ENCODE measurements at regions of chr3 and their contacts with region 1.

Region 1: DNA sequence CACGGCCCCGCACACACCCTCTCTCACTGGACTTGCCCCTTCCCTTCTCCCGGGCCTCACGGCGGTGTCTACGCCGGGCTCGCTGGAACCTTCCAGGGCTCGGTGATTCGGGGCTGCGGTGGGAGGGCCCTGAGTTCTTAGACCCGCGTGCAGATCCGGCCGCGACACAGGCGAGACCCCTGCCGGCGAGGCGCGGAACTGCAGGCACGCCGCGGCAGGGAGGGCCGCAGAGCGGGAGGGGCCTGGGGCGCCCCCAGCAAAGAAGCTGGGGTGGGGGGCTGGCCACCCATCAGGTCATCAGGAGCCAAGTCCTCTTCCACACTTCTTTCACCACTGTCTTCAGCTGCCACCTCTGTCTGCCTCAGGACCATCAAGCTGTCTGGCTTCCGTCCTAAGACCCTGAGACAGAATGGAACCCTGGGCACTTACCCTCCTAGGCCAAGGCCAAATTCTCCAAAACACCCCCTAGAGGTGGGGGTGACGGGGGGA is 164.5 kb downstream of the XXYLT1 start:
- DNase-seq: peak; percentile 39
- H3K4me3 ChIP-seq: no peak overlapping the region
- H3K27ac ChIP-seq: no peak overlapping the region
- H3K4me1 ChIP-seq: peaks cover 5% of the 10 kb centered on the region
- H3K27me3 ChIP-seq: no peaks in the 10 kb centered on the region
- CTCF ChIP-seq: peak; percentile 98 to 100 (median 100)
- POLR2A ChIP-seq: no peak

Region 2: DNA sequence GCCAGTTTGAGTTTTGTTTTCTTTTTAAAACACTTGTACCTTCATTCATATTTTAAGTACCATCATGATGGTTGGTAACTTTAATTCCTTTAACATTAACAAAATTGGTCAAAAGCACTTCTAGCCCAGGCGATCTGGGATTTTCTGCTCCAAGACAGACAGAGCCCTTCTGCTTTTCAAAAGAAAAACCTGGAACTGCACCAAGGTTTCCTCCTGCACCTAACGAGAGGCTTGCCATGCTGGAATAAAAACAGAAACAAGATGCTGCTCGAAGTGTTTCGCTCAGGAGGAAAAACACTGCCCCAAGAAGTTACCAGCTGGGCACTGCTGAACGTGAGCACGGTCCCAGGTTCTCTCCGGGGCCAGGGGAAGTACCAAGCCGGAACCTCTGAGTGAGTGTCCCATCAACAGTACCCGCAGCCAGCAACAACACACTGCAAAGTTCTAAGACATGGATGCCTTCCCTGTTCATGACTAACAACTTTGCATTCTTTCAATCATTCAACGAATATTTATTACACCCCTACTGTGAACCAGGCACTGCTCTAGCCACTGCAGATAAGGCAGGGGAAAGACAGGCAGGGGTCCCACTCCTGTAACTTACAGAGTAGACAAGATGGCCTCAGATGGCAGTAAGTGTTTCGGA is 65.7 kb after region 1 on chr3:
- intact Hi-C with region 1: no loop called
- DNase-seq: no peak
- H3K4me3 ChIP-seq: no peak overlapping the region
- H3K27ac ChIP-seq: no peak overlapping the region
- H3K4me1 ChIP-seq: no peaks in the 10 kb centered on the region
- H3K27me3 ChIP-seq: no peaks in the 10 kb centered on the region
- CTCF ChIP-seq: no peak
- POLR2A ChIP-seq: no peak

Region 3: GRCh38 chr3:195259475-195260279 is 153.2 kb after region 1 on chr3:
- intact Hi-C with region 1: loop called (anchors 5 kb)
- DNase-seq: peak; percentile 85
- H3K4me3 ChIP-seq: peak overlapping the region; percentile 53 to 60
- H3K27ac ChIP-seq: peak overlapping the region; percentile 93 to 94
- H3K4me1 ChIP-seq: peaks cover 11% of the 10 kb centered on the region
- H3K27me3 ChIP-seq: no peaks in the 10 kb centered on the region
- CTCF ChIP-seq: peak; percentile 62 to 100 (median 90)
- POLR2A ChIP-seq: peak; percentile 47